ENCODE measurements at regions of chr6 and their contacts with region 1.

Region 1: GRCh38 chr6:25086528-25087091 is 150.8 kb upstream of the RIPOR2 start:
- DNase-seq: no peak
- H3K4me3 ChIP-seq: no peak overlapping the region
- H3K27me3 ChIP-seq: no peaks in the 10 kb centered on the region
- CTCF ChIP-seq: no peak

Region 2: DNA sequence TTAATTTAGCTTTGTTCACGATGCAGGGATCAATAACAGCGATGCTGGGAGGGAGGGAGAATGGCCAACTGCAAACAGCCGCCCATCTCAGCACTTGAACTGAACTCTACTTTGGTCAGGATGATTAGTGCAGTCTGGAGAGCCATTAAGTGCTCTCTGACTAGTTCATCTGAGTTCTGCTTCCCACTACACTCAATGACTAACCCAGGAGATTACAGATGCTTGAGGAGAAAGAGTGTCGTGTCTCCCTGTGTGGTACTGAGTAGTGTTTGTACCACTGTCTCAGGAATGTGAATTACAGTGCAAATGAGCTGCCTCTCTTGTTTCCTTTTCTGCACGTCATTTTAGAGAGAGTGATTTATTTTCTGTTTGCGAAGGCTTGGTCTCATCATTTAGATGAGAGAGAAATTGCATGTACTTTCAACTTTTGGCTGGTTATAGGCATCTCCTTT is 216.1 kb after region 1 on chr6:
- CTCF ChIA-PET with region 1: no interaction called
- POLR2A ChIA-PET with region 1: interaction called, 17 read pairs
- DNase-seq: peak; percentile 61
- H3K4me3 ChIP-seq: no peak overlapping the region
- H3K27me3 ChIP-seq: no peaks in the 10 kb centered on the region
- CTCF ChIP-seq: no peak